ENCODE measurements at regions of chr4 and their contacts with region 1.

Region 1: GRCh38 chr4:22444813-22445212 is 71.1 kb downstream of the ADGRA3 start:
- DNase-seq: no peak
- ATAC-seq: peak; percentile 58
- H3K4me3 Mint-ChIP-seq: peak overlapping the region; percentile 72
- H3K27ac Mint-ChIP-seq: peak overlapping the region; percentile 96
- H3K4me1 Mint-ChIP-seq: peaks cover 36% of the 10 kb centered on the region
- H3K27me3 Mint-ChIP-seq: no peaks in the 10 kb centered on the region

Region 2: GRCh38 chr4:20700007-20700761 is 1744.6 kb before region 1 on chr4 and contains the start of gene PACRGL:
- CTCF ChIA-PET with region 1: no interaction called
- POLR2A ChIA-PET with region 1: no interaction called
- intact Hi-C with region 1: loop called in 1 of 2 experiments (anchors 5 kb)
- DNase-seq: peak; percentile 96
- ATAC-seq: peak; percentile 100
- H3K4me3 Mint-ChIP-seq: peak within 1 kb of the TSS; percentile 89
- H3K27ac Mint-ChIP-seq: peak within 1 kb of the TSS; percentile 83
- H3K4me1 Mint-ChIP-seq: peaks cover 34% of the 10 kb centered on the region
- H3K27me3 Mint-ChIP-seq: no peaks in the 10 kb centered on the region
- total RNA-seq, gene PACRGL: 10.8 to 11.0 TPM

Region 3: DNA sequence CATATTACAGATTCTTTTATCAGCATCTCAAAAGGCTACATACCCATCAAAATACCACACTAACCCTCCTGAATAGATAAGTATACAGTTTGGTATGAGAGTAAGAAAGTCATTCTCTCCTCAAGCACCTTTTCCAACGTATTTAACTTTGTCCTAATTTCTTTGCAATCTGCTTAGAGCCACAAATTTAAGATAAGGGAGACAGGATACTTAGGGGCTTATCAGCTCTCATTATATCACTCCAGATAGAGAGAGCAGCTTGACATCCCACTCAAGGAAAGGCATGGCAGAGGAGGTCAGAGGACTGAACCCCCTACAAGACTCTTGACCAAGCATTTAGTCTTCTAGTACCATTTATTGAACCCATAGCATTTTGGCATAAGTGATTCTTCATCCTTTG is 191.4 kb before region 1 on chr4:
- CTCF ChIA-PET with region 1: no interaction called
- POLR2A ChIA-PET with region 1: no interaction called
- intact Hi-C with region 1: no loop called
- DNase-seq: no peak
- ATAC-seq: no peak
- H3K4me3 Mint-ChIP-seq: no peak overlapping the region
- H3K27ac Mint-ChIP-seq: no peak overlapping the region
- H3K4me1 Mint-ChIP-seq: no peaks in the 10 kb centered on the region
- H3K27me3 Mint-ChIP-seq: no peaks in the 10 kb centered on the region

Region 4: DNA sequence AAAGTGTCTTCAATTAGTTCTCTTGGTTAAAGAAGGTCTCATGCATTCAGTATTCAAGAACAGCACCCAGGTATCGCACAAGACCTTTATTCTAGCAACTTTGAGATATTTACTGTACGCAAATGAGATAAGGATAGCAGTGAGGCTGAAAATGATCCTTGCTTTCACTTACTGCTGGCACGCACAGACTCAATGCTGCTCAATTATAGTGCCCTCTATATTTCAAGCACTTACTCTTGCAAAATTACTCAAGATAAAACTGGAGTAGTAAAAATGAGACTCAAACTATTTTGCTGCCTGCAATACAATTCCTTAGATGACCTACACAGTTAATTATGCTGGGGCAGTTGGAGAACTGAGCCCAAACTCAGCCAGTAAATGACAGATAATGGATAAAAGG is 10.1 kb after region 1 on chr4:
- CTCF ChIA-PET with region 1: interaction called, 11 read pairs
- POLR2A ChIA-PET with region 1: no interaction called
- intact Hi-C with region 1: loop called in 1 of 2 experiments (anchors 1 kb)
- DNase-seq: no peak
- ATAC-seq: no peak
- H3K4me3 Mint-ChIP-seq: no peak overlapping the region
- H3K27ac Mint-ChIP-seq: no peak overlapping the region
- H3K4me1 Mint-ChIP-seq: peaks cover 2% of the 10 kb centered on the region
- H3K27me3 Mint-ChIP-seq: no peaks in the 10 kb centered on the region

Region 5: GRCh38 chr4:22500831-22501719 is 56.3 kb after region 1 on chr4:
- CTCF ChIA-PET with region 1: interaction called, 4 read pairs
- POLR2A ChIA-PET with region 1: interaction called, 6 read pairs
- intact Hi-C with region 1: loop called (anchors 1 kb)
- DNase-seq: peak; percentile 66
- ATAC-seq: peak; percentile 97
- H3K4me3 Mint-ChIP-seq: peak overlapping the region; percentile 12
- H3K27ac Mint-ChIP-seq: no peak overlapping the region
- H3K4me1 Mint-ChIP-seq: peaks cover 29% of the 10 kb centered on the region
- H3K27me3 Mint-ChIP-seq: no peaks in the 10 kb centered on the region

Region 6: DNA sequence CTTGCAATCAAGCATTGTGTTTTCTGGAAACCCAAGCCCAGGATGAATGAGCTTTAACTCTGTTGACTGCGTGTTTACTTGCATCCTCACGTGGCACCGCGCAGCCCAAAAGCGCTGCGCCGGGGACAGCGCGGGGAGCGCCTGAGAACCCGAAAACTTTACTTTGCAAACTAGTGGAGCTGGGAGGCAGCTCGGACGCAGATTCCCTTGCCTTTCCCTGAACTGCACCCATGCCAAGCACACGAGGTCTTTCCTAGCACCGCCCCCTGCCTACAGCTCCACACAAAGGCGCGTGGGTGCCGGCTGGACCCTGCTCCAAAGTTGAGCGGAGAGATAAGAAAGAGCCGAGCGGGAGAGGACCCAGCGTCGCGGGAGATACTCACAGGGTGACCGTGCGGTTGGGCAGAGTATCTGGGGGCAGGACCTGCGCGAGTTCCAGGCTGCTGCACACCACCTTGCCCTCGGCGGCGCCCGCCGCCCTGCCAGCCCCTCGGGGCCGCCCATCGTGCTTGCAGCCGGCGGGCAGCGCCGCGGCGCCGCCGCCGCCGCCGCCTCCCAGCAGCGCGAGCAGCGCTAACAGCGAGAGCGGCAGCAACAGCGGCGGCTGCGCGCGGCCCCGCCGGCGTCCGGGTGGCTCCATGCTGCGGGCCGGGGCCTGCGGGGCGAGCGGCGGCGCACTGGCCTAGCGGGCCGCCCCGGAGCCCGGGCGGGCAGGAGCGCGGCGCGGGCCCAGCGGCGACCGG is 70.5 kb after region 1 on chr4:
- CTCF ChIA-PET with region 1: no interaction called
- POLR2A ChIA-PET with region 1: no interaction called
- intact Hi-C with region 1: loop called (anchors 1 to 5 kb)
- DNase-seq: peak; percentile 56
- ATAC-seq: peak; percentile 72
- H3K4me3 Mint-ChIP-seq: peak overlapping the region; percentile 89
- H3K27ac Mint-ChIP-seq: peak overlapping the region; percentile 88
- H3K4me1 Mint-ChIP-seq: peaks cover 13% of the 10 kb centered on the region
- H3K27me3 Mint-ChIP-seq: peaks cover 14% of the 10 kb centered on the region

Region 7: GRCh38 chr4:23130845-23131244 is 686.0 kb after region 1 on chr4:
- CTCF ChIA-PET with region 1: no interaction called
- POLR2A ChIA-PET with region 1: no interaction called
- intact Hi-C with region 1: no loop called
- DNase-seq: no peak
- ATAC-seq: no peak
- H3K4me3 Mint-ChIP-seq: no peak overlapping the region
- H3K27ac Mint-ChIP-seq: no peak overlapping the region
- H3K4me1 Mint-ChIP-seq: no peaks in the 10 kb centered on the region
- H3K27me3 Mint-ChIP-seq: no peaks in the 10 kb centered on the region